ENCODE measurements at regions of chr1 and their contacts with region 1.

Region 1: DNA sequence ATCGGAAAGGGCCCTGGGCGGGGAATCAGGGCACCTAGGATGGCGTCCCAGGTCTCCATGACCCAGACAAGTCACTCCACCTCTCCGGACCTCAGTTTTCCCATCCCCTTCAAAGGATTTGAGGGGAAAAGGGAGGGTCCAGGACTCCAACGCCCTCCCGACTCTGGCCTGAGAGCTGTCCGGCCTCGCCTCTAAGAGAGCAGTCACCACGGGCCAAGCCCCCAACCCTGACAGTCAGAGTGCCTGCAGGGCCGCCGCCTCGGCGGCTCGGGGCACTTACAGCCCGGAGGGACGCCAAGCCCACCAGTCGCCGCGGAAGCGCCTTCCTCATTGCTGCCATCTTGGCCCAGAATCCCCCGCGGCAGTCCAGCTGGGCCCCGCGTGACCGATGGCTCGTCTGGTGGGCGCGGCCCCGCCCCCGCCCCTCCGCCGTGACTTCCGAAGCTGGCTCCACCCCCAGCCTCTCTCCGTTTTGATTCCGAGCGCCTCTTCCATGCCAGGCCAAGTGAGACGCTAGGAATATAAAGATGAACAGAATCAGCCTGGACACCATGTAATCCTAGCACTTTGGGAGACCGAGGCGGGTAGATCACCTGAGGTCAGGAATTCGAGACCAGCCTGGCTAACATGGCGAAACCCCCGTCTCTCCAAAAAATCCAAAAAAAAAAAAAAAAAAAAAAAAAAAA is at the start of gene HMGCL:
- DNase-seq: peak; percentile 72 to 94 (median 83)
- ATAC-seq: peak; percentile 94
- H3K4me3 ChIP-seq: peak within 1 kb of the TSS; percentile 93
- H3K4me3 Mint-ChIP-seq: peak within 1 kb of the TSS; percentile 96
- H3K27ac ChIP-seq: peak within 1 kb of the TSS; percentile 84 to 92
- H3K27ac Mint-ChIP-seq: peak within 1 kb of the TSS; percentile 96
- H3K4me1 ChIP-seq: peaks cover 15% of the 10 kb centered on the region
- H3K4me1 Mint-ChIP-seq: peaks cover 20% of the 10 kb centered on the region
- H3K27me3 ChIP-seq: no peaks in the 10 kb centered on the region
- H3K27me3 Mint-ChIP-seq: no peaks in the 10 kb centered on the region
- CTCF ChIP-seq: no peak
- total RNA-seq, gene HMGCL: 8.9 to 9.6 TPM

Region 2: GRCh38 chr1:23591460-23592208 is 233.6 kb before region 1 on chr1:
- CTCF ChIA-PET with region 1: no interaction called
- POLR2A ChIA-PET with region 1: no interaction called
- intact Hi-C with region 1: no loop called
- DNase-seq: peak in 3 of 14 experiments; percentile 24 to 63 (median 53)
- ATAC-seq: peak; percentile 23
- H3K4me3 ChIP-seq: no peak overlapping the region
- H3K4me3 Mint-ChIP-seq: peak overlapping the region; percentile 44
- H3K27ac ChIP-seq: peak overlapping the region in 1 of 2 donors; percentile 28
- H3K27ac Mint-ChIP-seq: peak overlapping the region; percentile 78
- H3K4me1 ChIP-seq: peaks cover 63% of the 10 kb centered on the region
- H3K4me1 Mint-ChIP-seq: peaks cover 65% of the 10 kb centered on the region
- H3K27me3 ChIP-seq: no peaks in the 10 kb centered on the region
- H3K27me3 Mint-ChIP-seq: no peaks in the 10 kb centered on the region
- CTCF ChIP-seq: no peak

Region 3: DNA sequence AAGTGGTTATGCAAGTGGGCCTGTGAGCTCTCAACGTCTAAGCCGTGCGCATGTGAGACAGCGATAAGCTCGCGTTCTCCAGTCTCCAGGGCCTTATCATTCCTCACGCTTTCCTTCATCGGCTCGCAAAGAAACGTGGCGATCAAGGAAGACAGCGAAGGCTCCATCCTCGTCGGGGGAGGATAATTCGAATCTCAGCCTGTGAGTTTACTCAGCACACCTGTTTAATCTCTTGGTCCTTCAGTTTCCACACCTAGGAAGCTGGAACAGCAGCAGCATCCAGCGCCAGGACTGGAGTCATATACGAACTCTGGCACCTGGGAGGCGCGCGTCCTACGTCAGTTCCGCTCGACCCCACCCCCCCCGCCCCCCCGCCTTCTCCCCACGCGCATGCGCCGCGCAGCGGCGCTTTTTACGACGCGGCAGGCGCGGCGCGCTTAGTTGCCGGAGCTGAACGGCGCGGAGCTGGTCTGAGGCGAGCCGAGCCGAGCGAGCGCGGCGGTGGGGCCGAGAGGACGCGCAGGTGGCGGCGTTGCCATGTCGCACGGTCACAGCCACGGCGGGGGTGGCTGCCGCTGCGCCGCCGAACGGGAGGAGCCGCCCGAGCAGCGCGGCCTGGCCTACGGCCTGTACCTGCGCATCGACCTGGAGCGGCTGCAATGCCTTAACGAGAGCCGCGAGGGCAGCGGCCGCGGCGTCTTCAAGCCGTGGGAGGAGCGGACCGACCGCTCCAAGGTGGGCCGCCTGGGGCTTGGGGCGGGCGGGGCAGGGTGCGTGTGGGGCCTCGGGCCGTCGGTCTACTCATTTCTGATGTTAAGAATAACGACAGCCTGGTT is 47.0 kb before region 1 on chr1 and contains the start of gene PITHD1:
- CTCF ChIA-PET with region 1: no interaction called
- POLR2A ChIA-PET with region 1: interaction called, 10 read pairs
- intact Hi-C with region 1: no loop called
- DNase-seq: peak; percentile 58 to 94 (median 78)
- ATAC-seq: peak; percentile 80
- H3K4me3 ChIP-seq: peak within 1 kb of the TSS; percentile 80
- H3K4me3 Mint-ChIP-seq: peak within 1 kb of the TSS; percentile 92
- H3K27ac ChIP-seq: peak within 1 kb of the TSS; percentile 81 to 89
- H3K27ac Mint-ChIP-seq: peak within 1 kb of the TSS; percentile 98
- H3K4me1 ChIP-seq: peaks cover 34% of the 10 kb centered on the region
- H3K4me1 Mint-ChIP-seq: peaks cover 46% of the 10 kb centered on the region
- H3K27me3 ChIP-seq: no peaks in the 10 kb centered on the region
- H3K27me3 Mint-ChIP-seq: no peaks in the 10 kb centered on the region
- CTCF ChIP-seq: no peak
- total RNA-seq, gene PITHD1: 110 to 111 TPM

Region 4: DNA sequence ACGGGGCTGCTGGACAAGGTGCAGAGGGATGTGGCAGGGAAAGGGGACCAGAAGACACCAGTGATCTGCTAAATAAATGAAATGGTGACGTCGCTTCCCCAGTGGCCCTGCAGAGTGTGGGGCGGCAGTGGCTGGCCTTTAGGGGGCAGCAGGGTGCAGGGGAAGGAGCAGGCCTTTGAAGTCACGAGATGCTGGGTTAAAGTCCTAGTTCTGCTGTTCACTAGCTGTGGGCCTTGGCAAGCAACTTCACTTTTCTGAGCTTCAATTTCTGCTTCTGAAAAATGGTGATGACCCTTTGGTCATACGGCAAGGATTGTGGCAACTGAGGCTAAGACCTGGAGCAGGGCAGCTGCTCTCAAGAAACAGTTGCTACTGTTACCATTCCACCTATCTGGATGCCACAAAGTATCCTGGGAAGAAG is 15.5 kb before region 1 on chr1:
- CTCF ChIA-PET with region 1: interaction called, 44 read pairs
- POLR2A ChIA-PET with region 1: interaction called, 10 read pairs
- intact Hi-C with region 1: no loop called
- DNase-seq: peak; percentile 73 to 91 (median 78)
- ATAC-seq: peak; percentile 94
- H3K4me3 ChIP-seq: no peak overlapping the region
- H3K4me3 Mint-ChIP-seq: no peak overlapping the region
- H3K27ac ChIP-seq: no peak overlapping the region
- H3K27ac Mint-ChIP-seq: no peak overlapping the region
- H3K4me1 ChIP-seq: peaks cover 16% of the 10 kb centered on the region
- H3K4me1 Mint-ChIP-seq: peaks cover 14% of the 10 kb centered on the region
- H3K27me3 ChIP-seq: no peaks in the 10 kb centered on the region
- H3K27me3 Mint-ChIP-seq: no peaks in the 10 kb centered on the region
- CTCF ChIP-seq: peak; percentile 68

Region 5: DNA sequence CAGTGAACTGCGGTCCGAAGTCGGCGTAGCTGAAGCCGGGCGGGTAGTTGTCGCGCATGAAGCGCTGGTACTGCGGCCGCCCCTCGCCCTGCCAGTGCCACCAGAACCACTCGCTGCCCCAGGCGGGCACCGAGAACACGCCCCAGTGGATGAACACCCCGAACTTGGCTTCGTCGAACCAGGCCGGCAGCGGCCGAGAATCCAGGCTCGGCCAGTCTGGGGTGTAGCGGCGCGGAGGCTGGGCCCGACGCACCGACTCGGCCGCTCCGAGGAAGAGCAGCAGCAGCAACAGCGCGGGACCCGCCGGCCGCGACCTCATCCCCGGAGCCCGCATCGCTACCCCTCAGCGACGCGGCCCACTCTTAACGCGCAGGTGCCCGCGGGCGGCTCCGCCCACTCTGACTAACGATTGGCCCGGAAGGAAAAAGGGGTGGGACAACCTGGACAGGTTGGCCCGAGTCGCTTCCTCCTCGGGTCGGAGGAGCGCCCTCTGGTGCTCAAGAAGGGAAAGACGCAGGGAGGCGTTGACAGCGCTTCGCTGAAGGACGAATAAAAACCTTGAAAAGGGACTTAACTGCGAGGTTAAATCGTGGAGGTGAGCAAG is 42.8 kb after region 1 on chr1 and contains the start of gene FUCA1:
- CTCF ChIA-PET with region 1: interaction called, 3 read pairs
- POLR2A ChIA-PET with region 1: no interaction called
- intact Hi-C with region 1: loop called in 1 of 2 experiments (anchors 5 kb)
- DNase-seq: peak; percentile 90 to 99 (median 95)
- ATAC-seq: peak; percentile 99
- H3K4me3 ChIP-seq: peak within 1 kb of the TSS; percentile 86
- H3K4me3 Mint-ChIP-seq: peak within 1 kb of the TSS; percentile 87
- H3K27ac ChIP-seq: peak within 1 kb of the TSS; percentile 29 to 41
- H3K27ac Mint-ChIP-seq: peak within 1 kb of the TSS; percentile 81
- H3K4me1 ChIP-seq: peaks cover 29% of the 10 kb centered on the region
- H3K4me1 Mint-ChIP-seq: peaks cover 29% of the 10 kb centered on the region
- H3K27me3 ChIP-seq: no peaks in the 10 kb centered on the region
- H3K27me3 Mint-ChIP-seq: no peaks in the 10 kb centered on the region
- CTCF ChIP-seq: peak; percentile 96
- total RNA-seq, gene FUCA1: 3.6 to 4.1 TPM

Region 6: DNA sequence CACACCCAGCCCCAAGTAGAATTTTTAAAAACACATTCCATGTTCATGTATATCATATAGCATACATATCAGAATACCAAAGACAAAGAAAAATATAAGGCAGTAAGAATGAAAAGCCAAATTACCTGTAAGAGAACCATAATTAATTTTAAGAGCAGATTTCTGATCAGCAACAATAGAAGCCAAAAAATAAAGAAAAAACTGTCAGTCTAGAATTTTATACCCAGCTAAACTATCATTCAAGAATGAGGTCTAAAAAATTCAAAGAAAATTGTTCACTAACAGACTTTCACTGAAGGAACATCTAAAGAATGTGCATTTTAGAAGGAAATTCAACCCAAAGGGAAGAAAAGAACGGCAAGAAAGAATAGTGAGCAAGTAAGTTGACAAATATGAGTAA is 53.4 kb after region 1 on chr1:
- CTCF ChIA-PET with region 1: no interaction called
- POLR2A ChIA-PET with region 1: no interaction called
- intact Hi-C with region 1: no loop called
- DNase-seq: no peak
- ATAC-seq: no peak
- H3K4me3 ChIP-seq: no peak overlapping the region
- H3K4me3 Mint-ChIP-seq: no peak overlapping the region
- H3K27ac ChIP-seq: no peak overlapping the region
- H3K27ac Mint-ChIP-seq: no peak overlapping the region
- H3K4me1 ChIP-seq: no peaks in the 10 kb centered on the region
- H3K4me1 Mint-ChIP-seq: no peaks in the 10 kb centered on the region
- H3K27me3 ChIP-seq: peaks cover 0 to 5% of the 10 kb centered on the region in 2 experiments
- H3K27me3 Mint-ChIP-seq: no peaks in the 10 kb centered on the region
- CTCF ChIP-seq: no peak

Region 7: DNA sequence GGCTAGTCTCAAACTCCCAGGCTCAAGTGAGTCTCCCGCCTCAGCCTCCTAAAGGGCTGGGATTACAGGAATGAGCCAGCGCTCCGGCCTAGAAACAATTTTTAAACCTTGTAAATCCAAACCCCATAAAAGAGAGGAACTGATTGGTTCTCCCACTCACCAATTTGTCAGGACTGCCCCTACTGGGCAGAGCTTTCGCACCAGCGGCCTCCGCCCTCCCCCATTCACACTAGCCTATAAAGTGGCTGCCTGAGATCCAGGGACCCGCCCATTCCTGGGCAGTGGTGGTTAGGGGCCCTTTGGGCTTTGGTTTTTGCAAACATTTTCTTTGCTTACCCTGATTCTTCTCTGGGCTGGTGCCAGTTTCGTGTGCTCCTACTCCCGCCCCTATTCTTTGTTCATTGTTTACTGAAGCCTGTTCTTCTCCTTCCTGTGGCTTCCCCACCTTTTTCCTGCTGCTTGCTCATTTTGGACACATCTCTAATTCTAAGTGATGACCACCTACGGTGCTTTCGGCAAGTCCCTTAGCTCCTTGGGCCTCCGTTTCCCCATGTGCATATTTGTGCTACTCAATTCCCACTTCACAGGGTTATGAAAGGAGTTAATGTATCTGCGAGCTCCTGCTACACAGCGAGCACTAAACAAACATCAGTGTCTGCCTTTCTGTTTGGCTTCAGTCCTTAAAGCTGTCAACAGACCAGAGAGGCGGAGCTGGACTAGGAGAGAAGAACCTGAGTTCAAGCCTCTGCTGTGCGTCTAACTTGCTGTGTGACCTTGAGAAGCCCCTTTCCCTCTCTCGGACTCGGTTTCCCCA is 880.2 kb after region 1 on chr1:
- CTCF ChIA-PET with region 1: no interaction called
- POLR2A ChIA-PET with region 1: no interaction called
- intact Hi-C with region 1: no loop called
- DNase-seq: peak in 6 of 14 experiments; percentile 14 to 66 (median 39)
- ATAC-seq: peak; percentile 81
- H3K4me3 ChIP-seq: no peak overlapping the region
- H3K4me3 Mint-ChIP-seq: no peak overlapping the region
- H3K27ac ChIP-seq: no peak overlapping the region
- H3K27ac Mint-ChIP-seq: peak overlapping the region; percentile 11
- H3K4me1 ChIP-seq: peaks cover 21% of the 10 kb centered on the region
- H3K4me1 Mint-ChIP-seq: peaks cover 7% of the 10 kb centered on the region
- H3K27me3 ChIP-seq: no peaks in the 10 kb centered on the region
- H3K27me3 Mint-ChIP-seq: no peaks in the 10 kb centered on the region
- CTCF ChIP-seq: no peak

Region 8: DNA sequence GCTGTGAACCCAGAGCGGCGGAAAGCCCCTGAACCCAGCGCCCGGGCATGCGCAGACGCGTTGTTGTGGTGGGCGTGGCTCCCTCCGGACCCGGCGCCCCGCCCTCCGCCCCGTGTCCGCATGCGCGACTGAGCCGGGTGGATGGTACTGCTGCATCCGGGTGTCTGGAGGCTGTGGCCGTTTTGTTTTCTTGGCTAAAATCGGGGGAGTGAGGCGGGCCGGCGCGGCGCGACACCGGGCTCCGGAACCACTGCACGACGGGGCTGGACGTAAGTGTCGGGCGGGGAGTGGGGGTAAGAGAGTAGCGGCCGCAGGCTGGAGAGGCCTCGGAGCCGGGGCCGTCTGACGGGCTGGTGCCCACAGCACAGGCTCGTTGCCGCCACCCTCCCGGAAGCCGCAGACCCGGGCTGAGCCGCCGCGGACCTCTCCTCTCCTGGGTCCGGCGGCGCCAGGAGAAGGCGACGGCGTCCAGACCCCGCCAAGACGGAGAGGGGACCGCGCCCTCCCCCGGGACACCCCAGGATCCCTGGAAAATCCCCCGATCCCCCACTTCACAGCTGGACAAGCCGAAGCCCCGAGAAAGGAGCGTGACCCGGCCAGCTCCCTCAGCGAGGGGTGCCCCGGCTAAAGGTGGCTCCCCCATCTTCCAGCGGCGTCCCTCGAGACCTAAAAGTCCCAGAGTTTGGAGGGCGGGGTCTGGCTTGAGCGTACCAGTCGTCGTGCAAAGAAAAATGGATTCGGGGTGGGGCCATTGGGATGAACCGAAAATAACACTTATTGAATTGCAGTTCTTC is 1513.2 kb after region 1 on chr1 and contains the start of gene TMEM50A:
- CTCF ChIA-PET with region 1: no interaction called
- POLR2A ChIA-PET with region 1: no interaction called
- intact Hi-C with region 1: loop called in 1 of 2 experiments (anchors 10 kb)
- DNase-seq: peak; percentile 82 to 93 (median 89)
- ATAC-seq: peak; percentile 69
- H3K4me3 ChIP-seq: peak within 1 kb of the TSS; percentile 69
- H3K4me3 Mint-ChIP-seq: peak within 1 kb of the TSS; percentile 98
- H3K27ac ChIP-seq: peak within 1 kb of the TSS; percentile 83 to 97
- H3K27ac Mint-ChIP-seq: peak within 1 kb of the TSS; percentile 81
- H3K4me1 ChIP-seq: peaks cover 12% of the 10 kb centered on the region
- H3K4me1 Mint-ChIP-seq: peaks cover 39% of the 10 kb centered on the region
- H3K27me3 ChIP-seq: no peaks in the 10 kb centered on the region
- H3K27me3 Mint-ChIP-seq: no peaks in the 10 kb centered on the region
- CTCF ChIP-seq: no peak
- total RNA-seq, gene TMEM50A: 82.6 to 83.1 TPM